B cell (primary cell): ENCODE measurements at regions of chr17 and their contacts with region 1.

Region 1: GRCh38 chr17:49315551-49316257 is 46.3 kb downstream of the ZNF652 start:
- DNase-seq: peak; percentile 84
- ATAC-seq: peak; percentile 95
- H3K4me3 ChIP-seq: peak overlapping the region in 1 of 5 experiments; percentile 20
- H3K4me3 Mint-ChIP-seq: peak overlapping the region; percentile 87
- H3K27ac ChIP-seq: peak overlapping the region in 1 of 2 donors; percentile 74
- H3K27ac Mint-ChIP-seq: peak overlapping the region; percentile 86
- H3K4me1 ChIP-seq: peaks cover 21 to 22% of the 10 kb centered on the region in 2 donors
- H3K4me1 Mint-ChIP-seq: peaks cover 26% of the 10 kb centered on the region
- H3K27me3 ChIP-seq: no peaks in the 10 kb centered on the region
- H3K27me3 Mint-ChIP-seq: no peaks in the 10 kb centered on the region
- CTCF ChIP-seq: peak; percentile 97

Region 2: DNA sequence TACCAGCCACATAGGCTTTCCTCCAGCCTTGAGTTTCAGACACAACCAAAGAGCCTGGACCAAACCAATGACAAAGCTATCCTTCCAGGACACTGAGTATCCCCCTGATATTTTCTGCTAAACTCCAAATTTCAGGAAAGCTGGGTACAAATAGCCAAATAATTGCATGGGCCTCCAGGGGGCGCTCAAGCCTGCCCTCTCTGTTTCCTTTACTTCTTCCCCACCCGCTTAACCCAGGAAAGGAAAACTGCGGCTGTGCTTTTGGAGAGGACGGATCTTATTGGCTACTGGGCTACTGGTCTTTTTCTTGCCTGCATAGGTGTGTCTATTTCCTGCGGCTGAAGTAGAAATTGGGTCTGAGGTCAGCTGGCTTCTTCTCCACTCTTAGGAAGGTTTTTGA is 135.4 kb before region 1 on chr17:
- CTCF ChIA-PET with region 1: interaction called, 9 read pairs
- POLR2A ChIA-PET with region 1: no interaction called
- intact Hi-C with region 1: loop called (anchors 1 kb)
- DNase-seq: peak; percentile 77
- ATAC-seq: peak; percentile 53
- H3K4me3 ChIP-seq: no peak overlapping the region
- H3K4me3 Mint-ChIP-seq: no peak overlapping the region
- H3K27ac ChIP-seq: no peak overlapping the region
- H3K27ac Mint-ChIP-seq: no peak overlapping the region
- H3K4me1 ChIP-seq: peaks cover 0 to 4% of the 10 kb centered on the region in 2 donors
- H3K4me1 Mint-ChIP-seq: peaks cover 2% of the 10 kb centered on the region
- H3K27me3 ChIP-seq: peaks cover 0 to 8% (median 3%) of the 10 kb centered on the region in 4 experiments
- H3K27me3 Mint-ChIP-seq: peaks cover 4% of the 10 kb centered on the region
- CTCF ChIP-seq: peak; percentile 86

Region 3: DNA sequence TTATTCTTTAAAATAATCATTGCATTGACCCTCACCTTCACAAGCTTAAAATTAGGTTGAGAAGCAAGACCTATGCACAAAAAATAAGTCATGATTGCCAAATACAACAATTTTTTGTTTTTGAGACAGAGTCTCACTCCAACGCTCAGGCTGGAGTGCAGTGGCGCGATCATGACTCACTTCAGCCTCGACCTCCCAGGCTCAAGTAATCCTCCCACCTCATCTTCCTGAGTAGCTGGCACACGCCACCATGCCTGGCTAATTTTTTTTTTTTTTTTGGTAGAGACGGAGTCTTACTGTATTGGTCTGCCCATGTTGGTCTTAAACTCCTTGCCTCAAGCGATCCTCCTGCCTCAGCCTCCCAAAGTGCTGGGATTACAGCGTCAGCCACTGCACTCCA is 22.2 kb after region 1 on chr17:
- CTCF ChIA-PET with region 1: interaction called, 20 read pairs
- POLR2A ChIA-PET with region 1: interaction called, 11 read pairs
- intact Hi-C with region 1: loop called (anchors 1 kb)
- DNase-seq: no peak
- ATAC-seq: no peak
- H3K4me3 ChIP-seq: no peak overlapping the region
- H3K4me3 Mint-ChIP-seq: no peak overlapping the region
- H3K27ac ChIP-seq: no peak overlapping the region
- H3K27ac Mint-ChIP-seq: peak overlapping the region; percentile 50
- H3K4me1 ChIP-seq: peaks cover 28 to 38% of the 10 kb centered on the region in 2 donors
- H3K4me1 Mint-ChIP-seq: peaks cover 54% of the 10 kb centered on the region
- H3K27me3 ChIP-seq: no peaks in the 10 kb centered on the region
- H3K27me3 Mint-ChIP-seq: no peaks in the 10 kb centered on the region
- CTCF ChIP-seq: no peak

Region 4: GRCh38 chr17:49361902-49362722 is 46.4 kb after region 1 on chr17 and contains the start of gene ZNF652:
- CTCF ChIA-PET with region 1: interaction called, 114 read pairs
- POLR2A ChIA-PET with region 1: no interaction called
- intact Hi-C with region 1: loop called (anchors 2 kb)
- DNase-seq: peak; percentile 98
- ATAC-seq: peak; percentile 69
- H3K4me3 ChIP-seq: peak within 1 kb of the TSS; percentile 79 to 95 (median 89)
- H3K4me3 Mint-ChIP-seq: peak within 1 kb of the TSS; percentile 99
- H3K27ac ChIP-seq: peak within 1 kb of the TSS; percentile 70 to 76
- H3K27ac Mint-ChIP-seq: peak within 1 kb of the TSS; percentile 98
- H3K4me1 ChIP-seq: peaks cover 50% of the 10 kb centered on the region in 2 donors
- H3K4me1 Mint-ChIP-seq: peaks cover 62% of the 10 kb centered on the region
- H3K27me3 ChIP-seq: no peaks in the 10 kb centered on the region
- H3K27me3 Mint-ChIP-seq: no peaks in the 10 kb centered on the region
- CTCF ChIP-seq: no peak
- total RNA-seq, gene ZNF652: 82.4 and 86.2 TPM in 2 replicates

Region 5: DNA sequence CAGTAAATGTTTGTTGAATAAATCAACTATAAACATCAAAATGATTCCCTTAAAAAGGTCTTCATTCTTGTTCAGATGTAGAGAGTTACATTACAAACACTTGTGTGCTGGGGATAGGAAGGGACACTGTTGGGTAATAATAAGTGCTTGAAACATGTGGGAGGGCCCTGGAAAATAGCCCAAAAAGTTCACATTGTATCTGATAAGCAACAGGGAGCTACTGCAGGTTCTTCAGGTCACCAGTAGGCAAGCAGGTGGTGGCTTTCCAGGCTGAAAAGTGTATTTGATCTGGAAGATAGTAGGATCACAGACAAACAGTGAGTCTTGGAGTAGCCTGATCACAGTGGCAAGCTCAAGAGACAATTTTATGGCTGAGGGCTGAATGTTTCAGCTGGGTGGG is 65.4 kb after region 1 on chr17:
- CTCF ChIA-PET with region 1: interaction called, 368 read pairs
- POLR2A ChIA-PET with region 1: no interaction called
- intact Hi-C with region 1: no loop called
- DNase-seq: no peak
- ATAC-seq: no peak
- H3K4me3 ChIP-seq: no peak overlapping the region
- H3K4me3 Mint-ChIP-seq: no peak overlapping the region
- H3K27ac ChIP-seq: peak overlapping the region; percentile 2 to 36
- H3K27ac Mint-ChIP-seq: peak overlapping the region; percentile 46
- H3K4me1 ChIP-seq: peaks cover 32 to 38% of the 10 kb centered on the region in 2 donors
- H3K4me1 Mint-ChIP-seq: peaks cover 52% of the 10 kb centered on the region
- H3K27me3 ChIP-seq: no peaks in the 10 kb centered on the region
- H3K27me3 Mint-ChIP-seq: no peaks in the 10 kb centered on the region
- CTCF ChIP-seq: no peak

Region 6: DNA sequence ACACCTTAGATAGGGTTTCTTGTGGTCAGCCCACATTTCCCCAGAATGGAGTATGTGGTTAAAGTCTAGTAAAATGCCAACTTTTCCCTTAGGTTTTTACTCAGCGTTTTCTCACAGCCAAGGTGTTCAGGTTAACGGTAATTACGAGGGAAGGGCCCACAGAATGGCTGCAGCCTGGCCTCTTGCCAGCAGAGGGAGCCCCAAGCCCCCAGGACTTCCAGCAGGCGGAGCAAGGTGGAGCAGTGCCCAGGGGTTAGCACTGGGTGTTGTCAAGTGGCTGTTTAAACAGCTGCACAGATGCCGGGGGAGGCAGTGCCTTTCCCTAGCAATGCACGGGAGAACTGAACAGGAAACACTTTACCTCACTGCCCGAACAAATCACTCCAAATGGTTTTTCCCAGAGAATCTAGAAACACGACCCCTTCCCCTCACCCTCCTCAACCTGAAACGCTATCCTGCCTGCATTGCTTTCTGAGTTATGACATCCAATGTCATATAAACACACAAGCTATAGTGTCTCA is 92.3 kb after region 1 on chr17:
- CTCF ChIA-PET with region 1: interaction called, 19 read pairs
- POLR2A ChIA-PET with region 1: no interaction called
- intact Hi-C with region 1: no loop called
- DNase-seq: peak; percentile 87
- ATAC-seq: peak; percentile 97
- H3K4me3 ChIP-seq: no peak overlapping the region
- H3K4me3 Mint-ChIP-seq: no peak overlapping the region
- H3K27ac ChIP-seq: no peak overlapping the region
- H3K27ac Mint-ChIP-seq: peak overlapping the region; percentile 28
- H3K4me1 ChIP-seq: peaks cover 24 to 33% of the 10 kb centered on the region in 2 donors
- H3K4me1 Mint-ChIP-seq: peaks cover 28% of the 10 kb centered on the region
- H3K27me3 ChIP-seq: no peaks in the 10 kb centered on the region
- H3K27me3 Mint-ChIP-seq: no peaks in the 10 kb centered on the region
- CTCF ChIP-seq: peak; percentile 99